ENCODE measurements at regions of chr13 and their contacts with region 1.

Region 1: GRCh38 chr13:24270639-24271141 is 38.7 kb upstream of the C1QTNF9 start:
- DNase-seq: peak; percentile 89
- H3K4me3 Mint-ChIP-seq: peak overlapping the region; percentile 91
- H3K27ac Mint-ChIP-seq: peak overlapping the region; percentile 96
- H3K4me1 Mint-ChIP-seq: peaks cover 82% of the 10 kb centered on the region
- H3K27me3 Mint-ChIP-seq: peaks cover 2% of the 10 kb centered on the region

Region 2: GRCh38 chr13:23960566-23961156 is 310.0 kb before region 1 on chr13:
- intact Hi-C with region 1: loop called (anchors 5 kb)
- DNase-seq: peak; percentile 75
- H3K4me3 Mint-ChIP-seq: no peak overlapping the region
- H3K27ac Mint-ChIP-seq: no peak overlapping the region
- H3K4me1 Mint-ChIP-seq: peaks cover 38% of the 10 kb centered on the region
- H3K27me3 Mint-ChIP-seq: peaks cover 5% of the 10 kb centered on the region

Region 3: DNA sequence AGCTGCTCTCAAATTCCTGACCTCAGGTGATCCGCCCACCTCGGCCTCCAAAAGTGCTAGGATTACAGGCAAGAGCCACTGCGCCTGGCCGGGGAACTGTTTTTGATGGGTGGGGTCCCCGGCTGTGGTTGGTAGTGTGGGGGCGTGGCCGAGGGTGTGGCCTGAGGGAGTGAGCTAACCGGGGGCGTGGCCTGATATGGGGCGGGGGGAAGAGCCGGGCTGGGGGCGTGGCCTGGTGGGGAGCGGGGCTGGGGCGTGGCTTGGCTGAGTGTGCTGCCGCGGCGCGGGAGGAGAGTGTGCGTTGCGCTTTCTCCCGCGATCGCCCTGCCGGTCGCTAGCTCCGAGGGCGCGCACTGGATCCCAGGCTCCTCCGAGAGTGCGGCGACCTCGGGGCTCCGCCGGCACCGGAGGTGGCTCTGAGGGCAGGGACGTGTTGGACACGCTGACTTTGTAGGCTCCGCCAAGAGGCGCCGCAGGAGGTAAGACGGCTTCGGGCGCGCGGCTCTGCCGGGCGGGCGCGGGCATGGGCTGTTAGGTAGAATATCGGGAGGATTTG is 110.2 kb before region 1 on chr13 and contains the start of gene SPATA13:
- intact Hi-C with region 1: loop called (anchors 2 kb)
- DNase-seq: peak; percentile 97
- H3K4me3 Mint-ChIP-seq: peak within 1 kb of the TSS; percentile 95
- H3K27ac Mint-ChIP-seq: peak within 1 kb of the TSS; percentile 90
- H3K4me1 Mint-ChIP-seq: peaks cover 21% of the 10 kb centered on the region
- H3K27me3 Mint-ChIP-seq: peaks cover 27% of the 10 kb centered on the region
- total RNA-seq, gene SPATA13: 41.9 and 43.6 TPM in 2 replicates

Region 4: GRCh38 chr13:24228852-24229458 is 41.7 kb before region 1 on chr13:
- intact Hi-C with region 1: loop called (anchors 1 kb)
- DNase-seq: peak; percentile 82
- H3K4me3 Mint-ChIP-seq: no peak overlapping the region
- H3K27ac Mint-ChIP-seq: peak overlapping the region; percentile 10
- H3K4me1 Mint-ChIP-seq: peaks cover 48% of the 10 kb centered on the region
- H3K27me3 Mint-ChIP-seq: no peaks in the 10 kb centered on the region

Region 5: DNA sequence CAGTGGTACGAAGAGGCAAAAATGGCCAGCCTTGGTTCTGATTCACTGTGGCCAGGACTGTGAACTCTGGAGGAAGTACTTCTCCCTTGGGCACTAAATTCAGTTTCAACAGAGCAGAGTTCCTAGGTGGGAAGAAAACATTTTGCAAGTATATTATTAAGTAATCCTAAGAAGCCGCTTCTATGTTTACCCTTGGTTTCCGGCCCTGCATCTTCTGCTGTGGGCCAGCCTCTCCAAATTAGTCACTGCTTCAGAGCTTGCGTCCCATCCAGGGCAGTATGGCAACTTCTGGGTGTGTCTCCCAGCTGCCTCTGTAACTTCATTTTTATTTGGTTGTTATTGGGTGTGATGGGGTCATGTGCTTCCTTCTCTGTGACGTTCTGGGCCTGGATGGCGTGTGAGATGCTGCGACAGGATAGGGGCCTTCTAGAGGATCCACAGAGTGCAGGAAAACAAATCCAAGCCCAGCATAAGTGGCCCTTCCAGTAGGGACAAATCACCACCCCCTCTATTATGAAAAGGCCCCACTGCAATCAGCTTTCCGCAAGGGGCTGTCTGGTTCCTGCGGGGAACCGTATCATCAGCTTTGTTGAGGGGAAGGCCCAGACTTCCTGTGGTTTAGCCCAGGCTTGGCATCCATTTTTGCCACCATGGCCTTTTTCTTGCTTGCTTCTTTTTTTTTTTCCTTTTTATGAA is 16.4 kb before region 1 on chr13:
- intact Hi-C with region 1: loop called (anchors 1 kb)
- DNase-seq: peak; percentile 85
- H3K4me3 Mint-ChIP-seq: peak overlapping the region; percentile 81
- H3K27ac Mint-ChIP-seq: peak overlapping the region; percentile 97
- H3K4me1 Mint-ChIP-seq: peaks cover 66% of the 10 kb centered on the region
- H3K27me3 Mint-ChIP-seq: no peaks in the 10 kb centered on the region

Region 6: DNA sequence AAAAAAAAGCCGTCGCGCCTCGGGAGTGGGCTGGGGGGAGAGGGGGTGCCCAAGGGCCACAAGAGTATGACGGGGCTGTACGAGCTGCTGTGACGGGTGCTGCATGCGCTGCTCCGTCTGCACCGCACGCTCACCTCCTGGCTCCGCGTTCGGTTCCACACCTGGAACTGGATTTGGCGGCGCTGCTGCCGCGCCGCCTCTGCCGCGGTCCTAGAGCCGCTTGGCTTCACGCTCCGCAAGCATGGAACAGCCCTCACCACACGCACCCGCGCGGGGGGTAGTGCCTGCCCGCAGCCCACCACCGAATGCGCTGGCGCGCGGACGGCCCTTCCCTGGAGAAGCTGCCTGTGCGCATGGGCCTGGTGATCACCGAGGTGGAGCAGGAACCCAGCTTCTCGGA is 57.5 kb after region 1 on chr13:
- intact Hi-C with region 1: no loop called
- DNase-seq: no peak
- H3K4me3 Mint-ChIP-seq: no peak overlapping the region
- H3K27ac Mint-ChIP-seq: no peak overlapping the region
- H3K4me1 Mint-ChIP-seq: no peaks in the 10 kb centered on the region
- H3K27me3 Mint-ChIP-seq: peaks cover 51% of the 10 kb centered on the region

Region 7: GRCh38 chr13:25286969-25287961 is 1016.6 kb after region 1 on chr13 and contains the start of gene MTMR6:
- intact Hi-C with region 1: loop called (anchors 10 kb)
- DNase-seq: peak; percentile 98
- H3K4me3 Mint-ChIP-seq: peak within 1 kb of the TSS; percentile 91
- H3K27ac Mint-ChIP-seq: peak within 1 kb of the TSS; percentile 95
- H3K4me1 Mint-ChIP-seq: peaks cover 28% of the 10 kb centered on the region
- H3K27me3 Mint-ChIP-seq: peaks cover 15% of the 10 kb centered on the region
- total RNA-seq, gene MTMR6: 15.7 and 16.2 TPM in 2 replicates

Measured in activated CD4-positive, alpha-beta T cell treated with anti-CD3 and anti-CD28 coated beads, Interleukin-2, amount 10 ng/mL, durations not matched to agents 24 days and 14 days (primary cell).